GM18951 (cell line): ENCODE measurements at regions of chr7 and their contacts with region 1.

Region 1: GRCh38 chr7:80060218-80060806 is 74.3 kb upstream of the GNAI1 start:
- POLR2A ChIP-seq: no peak

Region 2: GRCh38 chr7:79810916-79811315 is 249.4 kb before region 1 on chr7:
- in situ Hi-C with region 1: no loop called
- POLR2A ChIP-seq: no peak

Region 3: GRCh38 chr7:80244206-80244916 is 184.0 kb after region 1 on chr7:
- in situ Hi-C with region 1: no loop called
- POLR2A ChIP-seq: no peak

Region 4: GRCh38 chr7:80659120-80660055 is 599.1 kb after region 1 on chr7:
- in situ Hi-C with region 1: loop called (anchors 25 kb)
- POLR2A ChIP-seq: no peak